Panc1 (cell line): ENCODE measurements at regions of chr19 and their contacts with region 1.

Region 1: DNA sequence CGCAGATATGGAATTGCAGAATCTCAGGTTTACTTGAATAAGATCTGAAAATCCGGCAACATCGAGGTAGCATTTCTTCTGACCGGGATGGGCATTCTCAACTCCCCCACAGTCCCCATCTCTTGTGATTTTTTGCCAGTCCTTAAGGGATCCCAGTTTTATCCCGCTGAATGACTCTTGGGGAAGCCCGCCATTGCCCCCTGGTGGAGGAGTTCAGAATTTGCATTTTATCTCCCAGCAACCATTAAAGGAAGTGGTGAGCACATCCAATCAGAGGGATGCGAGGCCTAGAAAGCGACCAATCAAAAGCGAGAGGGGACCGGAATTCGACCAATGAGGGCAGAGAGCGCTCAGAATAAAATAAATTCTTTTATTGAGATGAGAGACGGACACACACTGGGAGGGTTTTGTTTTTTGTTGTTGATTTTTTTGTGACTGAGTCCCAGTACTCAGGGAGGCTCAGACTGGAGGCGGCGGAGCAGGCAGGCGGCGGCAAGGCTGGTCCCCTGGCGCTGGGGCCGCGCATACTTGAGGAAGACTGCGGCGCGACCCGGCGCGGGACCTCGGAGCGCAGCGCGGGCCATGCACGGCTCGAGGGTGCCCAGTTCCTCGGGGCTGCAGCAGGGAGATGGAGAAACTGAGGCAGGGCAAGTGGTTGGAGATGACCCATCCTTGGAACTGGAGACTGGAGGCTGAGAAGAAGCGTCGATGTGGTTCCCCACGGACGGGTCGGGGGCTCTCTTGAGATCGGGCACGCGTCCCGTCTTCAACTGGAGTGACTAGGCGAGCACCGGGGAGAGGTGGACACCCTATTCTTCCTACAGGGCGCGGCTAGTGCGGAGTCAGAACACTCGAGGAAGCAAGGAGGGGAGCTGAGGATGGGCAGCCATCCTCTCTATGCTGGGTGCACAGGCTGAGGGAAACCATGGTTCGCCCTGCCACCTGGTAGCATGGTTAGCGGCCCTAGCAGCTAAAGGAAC is 4.0 kb upstream of the TTC9B start:
- DNase-seq: peak; percentile 100
- ATAC-seq: peak; percentile 23
- H3K4me3 ChIP-seq: no peak overlapping the region
- H3K27ac ChIP-seq: no peak overlapping the region
- H3K4me1 ChIP-seq: peaks cover 39% of the 10 kb centered on the region
- H3K27me3 ChIP-seq: peaks cover 26% of the 10 kb centered on the region
- CTCF ChIP-seq: no peak

Region 2: DNA sequence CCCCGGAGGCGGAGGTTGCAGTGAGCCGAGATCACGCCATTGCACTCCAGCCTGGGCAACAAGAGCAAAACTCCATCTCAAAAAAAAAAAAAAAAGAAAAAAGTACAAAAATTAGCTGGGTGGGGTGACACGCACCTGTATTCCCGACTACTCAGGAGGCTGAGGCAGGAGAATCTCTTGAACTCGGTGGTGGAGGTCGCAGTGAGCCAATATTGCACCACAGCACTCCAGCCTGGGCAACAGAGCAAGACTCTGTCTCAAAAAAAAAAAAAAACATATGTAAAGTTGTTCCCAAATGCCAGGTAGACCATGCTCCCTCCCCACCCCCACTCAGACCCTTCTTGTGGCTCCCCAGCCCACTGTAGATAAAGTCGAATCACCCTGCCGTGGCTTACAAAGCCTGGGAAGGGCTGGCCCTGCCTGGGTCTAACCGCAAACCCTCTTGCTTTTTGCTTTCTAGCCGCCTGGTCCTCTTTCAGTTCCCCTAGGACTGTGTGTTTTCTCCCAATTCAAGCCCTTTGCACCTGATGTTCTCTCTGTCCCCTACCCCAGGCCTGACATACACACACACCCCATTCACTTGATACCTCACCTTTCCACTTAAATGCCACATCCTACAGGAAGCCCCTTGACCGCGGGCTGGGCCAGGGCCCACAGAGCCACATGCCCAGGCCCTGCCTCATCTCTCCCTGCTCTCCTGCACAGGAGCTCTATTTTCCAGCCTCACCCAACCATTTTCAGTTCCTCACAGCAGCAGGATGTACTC is 1638.7 kb before region 1 on chr19:
- CTCF ChIA-PET with region 1: interaction called, 13 read pairs
- POLR2A ChIA-PET with region 1: no interaction called
- in situ Hi-C with region 1: no loop called
- intact Hi-C with region 1: no loop called
- DNase-seq: no peak
- ATAC-seq: peak; percentile 62
- H3K4me3 ChIP-seq: no peak overlapping the region
- H3K27ac ChIP-seq: no peak overlapping the region
- H3K4me1 ChIP-seq: no peaks in the 10 kb centered on the region
- H3K27me3 ChIP-seq: no peaks in the 10 kb centered on the region
- CTCF ChIP-seq: no peak

Region 3: DNA sequence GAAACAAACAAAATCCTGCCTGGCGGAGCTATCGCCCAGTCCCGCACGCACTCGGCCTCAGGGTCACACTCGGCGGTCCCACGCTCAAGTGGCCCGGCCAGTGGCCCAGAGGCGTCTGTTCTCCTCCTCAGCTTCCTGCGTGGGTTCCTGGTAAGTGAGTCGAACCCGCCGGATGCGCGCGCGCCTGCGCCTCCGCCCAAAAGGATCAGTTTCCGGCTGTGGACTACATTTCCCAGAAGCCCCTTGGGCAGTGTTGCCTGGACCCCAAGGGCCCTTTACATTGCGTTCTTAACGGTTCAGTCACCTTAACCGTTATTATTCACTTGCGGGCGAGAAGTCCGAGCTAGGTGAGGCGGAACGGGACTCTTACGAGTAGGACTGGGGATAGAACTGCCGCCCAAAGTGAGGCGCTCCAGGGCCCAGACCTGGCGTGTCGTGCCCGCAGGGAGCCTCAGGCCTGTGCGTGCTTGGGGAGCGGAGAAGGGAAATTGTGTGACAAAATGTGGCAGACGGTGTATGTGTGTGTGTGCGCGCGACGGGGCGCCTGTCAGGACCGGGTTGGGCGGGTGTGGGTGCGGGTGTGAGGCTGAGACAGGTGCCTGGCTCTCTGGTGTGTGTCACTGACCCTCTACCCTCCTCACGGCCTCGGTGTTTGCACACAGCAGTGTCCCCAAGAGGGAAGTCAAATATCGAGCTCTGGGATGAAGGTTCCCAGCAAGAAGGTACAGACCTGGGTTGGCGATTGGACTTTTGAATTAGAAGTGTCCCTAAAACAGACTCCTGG is 225.1 kb before region 1 on chr19 and contains the start of gene ZNF546:
- CTCF ChIA-PET with region 1: no interaction called
- POLR2A ChIA-PET with region 1: no interaction called
- in situ Hi-C with region 1: no loop called
- intact Hi-C with region 1: loop called (anchors 5 kb)
- DNase-seq: peak; percentile 100
- ATAC-seq: peak; percentile 98
- H3K4me3 ChIP-seq: peak within 1 kb of the TSS; percentile 35 to 49
- H3K27ac ChIP-seq: peak within 1 kb of the TSS; percentile 83
- H3K4me1 ChIP-seq: peaks cover 19% of the 10 kb centered on the region
- H3K27me3 ChIP-seq: no peaks in the 10 kb centered on the region
- CTCF ChIP-seq: no peak
- total RNA-seq, gene ZNF546: 68.4 TPM

Region 4: DNA sequence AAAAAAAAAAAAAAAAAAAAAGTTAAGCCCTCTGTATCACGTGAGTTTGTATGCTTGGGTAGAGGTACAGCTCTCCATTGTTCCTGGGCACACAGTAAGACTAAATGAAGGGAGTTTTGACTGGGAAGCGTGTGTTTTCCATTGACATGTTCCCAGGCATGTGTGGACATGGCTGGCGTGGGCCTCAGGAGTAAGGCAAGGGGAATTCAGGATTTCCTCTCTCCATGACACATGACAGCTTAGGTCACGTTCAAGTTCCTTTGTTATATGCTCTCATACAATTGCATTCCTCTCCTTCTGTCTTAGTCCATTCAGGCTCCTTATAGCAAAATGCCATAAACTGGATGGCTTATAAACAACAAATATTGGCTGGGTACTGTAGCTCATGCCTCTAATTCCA is 48.1 kb before region 1 on chr19:
- CTCF ChIA-PET with region 1: interaction called, 14 read pairs
- POLR2A ChIA-PET with region 1: interaction called, 9 read pairs
- in situ Hi-C with region 1: no loop called
- intact Hi-C with region 1: no loop called
- DNase-seq: no peak
- ATAC-seq: no peak
- H3K4me3 ChIP-seq: no peak overlapping the region
- H3K27ac ChIP-seq: no peak overlapping the region
- H3K4me1 ChIP-seq: no peaks in the 10 kb centered on the region
- H3K27me3 ChIP-seq: 0 out of 2 replicates have a peak, but pooled peaks cover 2% of the 10 kb centered on the region
- CTCF ChIP-seq: no peak

Region 5: GRCh38 chr19:40210921-40211320 is 11.2 kb before region 1 on chr19:
- CTCF ChIA-PET with region 1: interaction called, 21 read pairs
- POLR2A ChIA-PET with region 1: interaction called, 9 read pairs
- in situ Hi-C with region 1: no loop called
- intact Hi-C with region 1: no loop called
- DNase-seq: no peak
- ATAC-seq: 0 out of 2 replicates have a peak, but pooled peaks have one; percentile 2
- H3K4me3 ChIP-seq: no peak overlapping the region
- H3K27ac ChIP-seq: no peak overlapping the region
- H3K4me1 ChIP-seq: no peaks in the 10 kb centered on the region
- H3K27me3 ChIP-seq: no peaks in the 10 kb centered on the region
- CTCF ChIP-seq: no peak

Region 6: GRCh38 chr19:40279120-40279551 is 57.0 kb after region 1 on chr19:
- CTCF ChIA-PET with region 1: interaction called, 8 read pairs
- POLR2A ChIA-PET with region 1: interaction called, 18 read pairs
- in situ Hi-C with region 1: no loop called
- intact Hi-C with region 1: no loop called
- DNase-seq: no peak
- ATAC-seq: no peak
- H3K4me3 ChIP-seq: no peak overlapping the region
- H3K27ac ChIP-seq: no peak overlapping the region
- H3K4me1 ChIP-seq: peaks cover 67% of the 10 kb centered on the region
- H3K27me3 ChIP-seq: no peaks in the 10 kb centered on the region
- CTCF ChIP-seq: no peak

Region 7: DNA sequence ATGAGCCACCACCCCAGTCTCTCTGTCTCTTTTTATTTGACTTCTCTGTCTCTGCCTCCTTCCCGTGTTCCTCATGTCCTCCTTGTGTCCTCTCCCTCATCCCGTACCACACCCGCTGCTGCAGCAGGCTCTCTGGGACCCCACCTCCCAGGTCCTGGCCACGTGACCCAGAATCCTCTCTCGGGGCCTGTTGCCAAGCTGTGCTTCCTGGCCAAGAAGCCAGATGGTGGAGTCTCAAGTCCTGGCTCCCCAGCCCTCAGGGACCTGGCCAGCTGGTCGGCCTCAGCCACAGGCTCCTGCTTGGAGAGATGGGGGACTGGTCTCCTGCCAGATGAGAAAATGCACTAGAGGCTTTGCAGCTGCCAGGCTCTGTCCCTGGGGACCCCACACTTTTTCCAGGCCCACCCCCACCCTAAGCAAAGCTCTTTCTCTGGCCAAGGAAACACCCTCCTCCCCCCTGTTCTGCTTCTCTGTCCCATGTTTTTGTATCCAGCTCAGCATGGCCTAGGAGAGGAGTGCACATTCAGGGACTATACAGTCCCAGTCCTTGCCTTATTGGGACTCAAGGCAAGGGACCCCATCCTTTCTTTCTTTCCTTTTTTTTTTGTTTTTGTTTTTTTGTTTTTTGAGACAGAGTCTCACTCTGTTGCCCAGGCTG is 320.2 kb after region 1 on chr19:
- CTCF ChIA-PET with region 1: no interaction called
- POLR2A ChIA-PET with region 1: no interaction called
- in situ Hi-C with region 1: no loop called
- intact Hi-C with region 1: no loop called
- DNase-seq: no peak
- ATAC-seq: no peak
- H3K4me3 ChIP-seq: no peak overlapping the region
- H3K27ac ChIP-seq: no peak overlapping the region
- H3K4me1 ChIP-seq: no peaks in the 10 kb centered on the region
- H3K27me3 ChIP-seq: no peaks in the 10 kb centered on the region
- CTCF ChIP-seq: no peak